Activated CD4-positive, alpha-beta memory T cell treated with anti-CD3 and anti-CD28 coated beads, Interleukin-2, amount 10 ng/mL, durations not matched to agents 7 days and 5 days (primary cell): ENCODE measurements at regions of chr10 and their contacts with region 1.

Region 1: GRCh38 chr10:102583435-102584417 is 60.6 kb upstream of the TRIM8 start:
- DNase-seq: peak; percentile 85
- H3K4me3 Mint-ChIP-seq: no peak overlapping the region
- H3K27ac Mint-ChIP-seq: no peak overlapping the region
- H3K4me1 Mint-ChIP-seq: peaks cover 18% of the 10 kb centered on the region
- H3K27me3 Mint-ChIP-seq: no peaks in the 10 kb centered on the region

Region 2: DNA sequence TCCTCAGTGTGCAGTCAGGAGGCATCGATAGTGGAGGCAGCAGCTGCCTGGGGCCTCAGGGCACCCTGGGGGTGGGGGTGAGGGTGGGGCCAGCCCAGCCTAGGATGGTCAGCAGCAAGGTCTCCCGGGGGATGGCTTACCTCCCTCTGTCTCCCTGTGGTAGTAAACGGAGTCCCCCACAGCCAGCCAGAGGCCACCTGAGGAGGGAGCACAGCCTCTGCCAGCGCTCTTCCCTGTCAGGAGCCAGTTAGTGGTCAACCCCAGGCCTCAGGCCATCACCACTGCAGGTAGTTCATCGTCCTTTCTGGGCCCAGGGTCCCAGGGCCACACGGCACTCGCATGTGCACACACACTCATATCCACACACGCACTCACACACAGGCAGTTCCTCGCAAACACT is 103.3 kb before region 1 on chr10:
- CTCF ChIA-PET with region 1: interaction called, 13 read pairs
- POLR2A ChIA-PET with region 1: no interaction called
- DNase-seq: no peak
- H3K4me3 Mint-ChIP-seq: no peak overlapping the region
- H3K27ac Mint-ChIP-seq: no peak overlapping the region
- H3K4me1 Mint-ChIP-seq: peaks cover 4% of the 10 kb centered on the region
- H3K27me3 Mint-ChIP-seq: no peaks in the 10 kb centered on the region

Region 3: GRCh38 chr10:102503281-102504220 is 80.2 kb before region 1 on chr10 and contains the start of gene SUFU:
- CTCF ChIA-PET with region 1: interaction called, 120 read pairs
- POLR2A ChIA-PET with region 1: interaction called, 9 read pairs
- DNase-seq: peak; percentile 99
- H3K4me3 Mint-ChIP-seq: no peak within 1 kb of the TSS
- H3K27ac Mint-ChIP-seq: peak within 1 kb of the TSS; percentile 73
- H3K4me1 Mint-ChIP-seq: peaks cover 41% of the 10 kb centered on the region
- H3K27me3 Mint-ChIP-seq: no peaks in the 10 kb centered on the region
- total RNA-seq, gene SUFU: 18.0 to 19.6 TPM